Activated CD4-positive, alpha-beta T cell treated with anti-CD3 and anti-CD28 coated beads for 36 hours (primary cell): ENCODE measurements at regions of chr3 and their contacts with region 1.

Region 1: DNA sequence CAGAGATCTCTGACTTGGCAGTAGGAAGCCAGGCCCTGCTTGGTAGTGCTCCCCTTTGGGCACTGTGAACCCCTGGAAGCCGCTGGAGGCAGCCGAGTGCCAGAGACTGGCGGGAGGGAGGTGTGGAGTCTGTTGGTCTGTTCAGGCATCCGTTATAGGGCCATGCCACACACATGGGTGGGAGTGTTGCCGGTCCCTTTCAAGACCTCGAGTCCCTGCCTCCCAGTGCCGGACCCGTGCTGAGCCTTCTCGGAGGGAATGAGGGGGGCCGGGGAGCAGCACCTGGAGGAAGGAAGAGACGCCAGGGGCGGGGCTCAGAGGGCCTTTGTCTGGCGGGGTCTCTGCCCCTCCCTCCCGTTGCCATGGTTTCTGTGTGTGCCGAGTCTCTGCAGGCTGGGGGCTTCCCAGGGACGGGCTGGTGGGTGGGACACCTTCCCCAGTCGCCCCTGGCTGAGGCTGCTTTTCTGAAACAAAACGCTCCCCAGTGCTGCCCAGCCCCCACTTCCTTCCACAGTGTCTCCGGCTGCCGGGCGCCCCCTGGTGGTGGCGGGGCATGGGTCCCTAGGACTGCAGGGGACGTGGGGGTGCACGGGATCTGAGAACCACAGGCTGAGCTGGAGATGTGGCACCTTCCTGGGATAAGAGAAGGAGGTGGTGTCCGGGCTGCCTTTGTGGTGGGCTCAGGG is 10.0 kb downstream of the GNAI2 start:
- DNase-seq: peak; percentile 98
- ATAC-seq: peak; percentile 76
- H3K4me3 Mint-ChIP-seq: peak overlapping the region; percentile 75
- H3K27ac Mint-ChIP-seq: peak overlapping the region; percentile 95
- H3K4me1 Mint-ChIP-seq: peaks cover 84% of the 10 kb centered on the region
- H3K27me3 Mint-ChIP-seq: no peaks in the 10 kb centered on the region

Region 2: GRCh38 chr3:49683162-49683561 is 562.8 kb before region 1 on chr3:
- CTCF ChIA-PET with region 1: no interaction called
- POLR2A ChIA-PET with region 1: no interaction called
- intact Hi-C with region 1: no loop called
- DNase-seq: no peak
- ATAC-seq: no peak
- H3K4me3 Mint-ChIP-seq: no peak overlapping the region
- H3K27ac Mint-ChIP-seq: no peak overlapping the region
- H3K4me1 Mint-ChIP-seq: peaks cover 7% of the 10 kb centered on the region
- H3K27me3 Mint-ChIP-seq: no peaks in the 10 kb centered on the region

Region 3: GRCh38 chr3:50260027-50260941 is 14.3 kb after region 1 on chr3:
- CTCF ChIA-PET with region 1: interaction called, 44 read pairs
- POLR2A ChIA-PET with region 1: interaction called, 4 read pairs
- intact Hi-C with region 1: loop called in 1 of 2 experiments (anchors 1 kb)
- DNase-seq: peak; percentile 94
- ATAC-seq: peak; percentile 91
- H3K4me3 Mint-ChIP-seq: peak overlapping the region; percentile 61
- H3K27ac Mint-ChIP-seq: peak overlapping the region; percentile 65
- H3K4me1 Mint-ChIP-seq: peaks cover 4% of the 10 kb centered on the region
- H3K27me3 Mint-ChIP-seq: no peaks in the 10 kb centered on the region